ENCODE measurements at regions of chr14 and their contacts with region 1.

Region 1: GRCh38 chr14:49892636-49893308 is at the start of gene ARF6:
- DNase-seq: peak; percentile 100
- ATAC-seq: peak; percentile 98 to 99
- total RNA-seq, gene ARF6: 28.6 to 38.0 TPM

Region 2: DNA sequence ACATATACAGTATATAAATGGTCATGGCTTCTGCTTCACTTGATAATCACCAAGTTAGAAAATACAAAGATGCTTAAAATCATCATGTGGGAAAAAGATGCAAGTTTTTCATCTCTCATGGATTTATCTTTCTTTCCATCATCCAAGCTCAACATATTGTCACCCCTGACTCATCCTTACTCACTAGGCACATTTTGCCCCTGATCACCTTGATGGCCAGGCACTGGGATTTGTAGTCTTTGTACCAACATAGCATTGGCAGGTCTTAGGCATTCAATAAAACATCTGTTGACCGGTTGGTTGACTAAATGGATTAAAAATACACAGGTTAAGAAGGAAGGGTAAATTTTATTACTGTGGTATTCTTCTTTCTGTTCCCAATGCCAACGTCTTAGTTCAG is 96.7 kb before region 1 on chr14:
- intact Hi-C with region 1: no loop called
- DNase-seq: no peak
- ATAC-seq: no peak

Region 3: GRCh38 chr14:50003213-50004031 is 110.7 kb after region 1 on chr14:
- intact Hi-C with region 1: loop called in 1 of 2 experiments (anchors 5 kb)
- DNase-seq: peak; percentile 91
- ATAC-seq: peak; percentile 71 to 77

Region 4: GRCh38 chr14:50023671-50024490 is 131.1 kb after region 1 on chr14:
- intact Hi-C with region 1: no loop called
- DNase-seq: no peak
- ATAC-seq: peak in 1 of 2 donors; percentile 83

Measured in left cardiac atrium (tissue), 4 donors.